ENCODE measurements at regions of chr21 and their contacts with region 1.

Region 1: GRCh38 chr21:38505654-38506515 is 7.6 kb upstream of the ERG start:
- DNase-seq: no peak
- ATAC-seq: peak; percentile 87
- H3K4me3 ChIP-seq: no peak overlapping the region
- H3K27ac ChIP-seq: no peak overlapping the region
- H3K4me1 ChIP-seq: peaks cover 7% of the 10 kb centered on the region
- H3K27me3 ChIP-seq: no peaks in the 10 kb centered on the region

Region 2: GRCh38 chr21:38712071-38712470 is 206.2 kb after region 1 on chr21:
- intact Hi-C with region 1: loop called in 2 of 4 experiments (anchors 10 kb)
- DNase-seq: no peak
- ATAC-seq: peak; percentile 60 to 78
- H3K4me3 ChIP-seq: no peak overlapping the region
- H3K27ac ChIP-seq: no peak overlapping the region
- H3K4me1 ChIP-seq: no peaks in the 10 kb centered on the region
- H3K27me3 ChIP-seq: peaks cover 5% of the 10 kb centered on the region

Region 3: GRCh38 chr21:38733973-38734546 is 228.2 kb after region 1 on chr21:
- intact Hi-C with region 1: loop called in 1 of 4 experiments (anchors 10 kb)
- DNase-seq: peak; percentile 88 to 97 (median 96)
- ATAC-seq: peak; percentile 90 to 95
- H3K4me3 ChIP-seq: peak overlapping the region; percentile 9
- H3K27ac ChIP-seq: peak overlapping the region; percentile 19
- H3K4me1 ChIP-seq: no peaks in the 10 kb centered on the region
- H3K27me3 ChIP-seq: no peaks in the 10 kb centered on the region

Region 4: GRCh38 chr21:39137248-39138178 is 631.6 kb after region 1 on chr21:
- intact Hi-C with region 1: loop called in 3 of 4 experiments (anchors 5 to 10 kb)
- DNase-seq: peak in 1 of 3 donors; percentile 63
- ATAC-seq: peak; percentile 47 to 64
- H3K4me3 ChIP-seq: no peak overlapping the region
- H3K27ac ChIP-seq: no peak overlapping the region
- H3K4me1 ChIP-seq: no peaks in the 10 kb centered on the region
- H3K27me3 ChIP-seq: no peaks in the 10 kb centered on the region

Measured in right cardiac atrium (tissue), 5 donors.